AG04450 (cell line): ENCODE measurements at regions of chr12 and their contacts with region 1.

Region 1: GRCh38 chr12:107884769-107885694 is 110.5 kb downstream of the ASCL4 start:
- DNase-seq: peak; percentile 10
- H3K4me3 ChIP-seq: no peak overlapping the region
- H3K27ac ChIP-seq: no peak overlapping the region
- H3K27me3 ChIP-seq: no peaks in the 10 kb centered on the region
- CTCF ChIP-seq: peak; percentile 81

Region 2: DNA sequence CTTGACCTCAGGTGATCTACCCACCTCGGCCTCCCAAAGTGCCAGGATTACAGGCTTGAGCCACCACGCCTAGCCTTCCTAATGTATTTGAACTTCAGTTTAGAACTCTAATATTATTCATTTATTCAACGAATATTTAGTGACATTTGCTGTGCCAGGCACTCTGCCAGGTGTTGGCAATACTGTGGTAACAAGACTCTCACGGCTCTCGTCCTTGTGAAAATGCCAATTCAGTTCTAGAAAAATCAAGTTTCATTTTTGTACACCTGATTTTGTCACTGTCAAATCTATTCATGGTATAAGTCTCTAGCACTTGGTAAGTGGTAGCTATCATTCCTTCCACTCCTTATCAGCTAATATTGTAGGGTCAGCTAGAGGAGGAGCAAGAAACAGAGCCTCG is 205.7 kb before region 1 on chr12:
- CTCF ChIA-PET with region 1: interaction called, 162 read pairs
- POLR2A ChIA-PET with region 1: no interaction called
- DNase-seq: no peak
- H3K4me3 ChIP-seq: no peak overlapping the region
- H3K27ac ChIP-seq: no peak overlapping the region
- H3K27me3 ChIP-seq: peaks cover 17% of the 10 kb centered on the region
- CTCF ChIP-seq: no peak

Region 3: GRCh38 chr12:107702106-107702505 is 182.9 kb before region 1 on chr12:
- CTCF ChIA-PET with region 1: interaction called, 30 read pairs
- POLR2A ChIA-PET with region 1: no interaction called
- DNase-seq: no peak
- H3K4me3 ChIP-seq: no peak overlapping the region
- H3K27ac ChIP-seq: no peak overlapping the region
- H3K27me3 ChIP-seq: no peaks in the 10 kb centered on the region
- CTCF ChIP-seq: no peak

Region 4: DNA sequence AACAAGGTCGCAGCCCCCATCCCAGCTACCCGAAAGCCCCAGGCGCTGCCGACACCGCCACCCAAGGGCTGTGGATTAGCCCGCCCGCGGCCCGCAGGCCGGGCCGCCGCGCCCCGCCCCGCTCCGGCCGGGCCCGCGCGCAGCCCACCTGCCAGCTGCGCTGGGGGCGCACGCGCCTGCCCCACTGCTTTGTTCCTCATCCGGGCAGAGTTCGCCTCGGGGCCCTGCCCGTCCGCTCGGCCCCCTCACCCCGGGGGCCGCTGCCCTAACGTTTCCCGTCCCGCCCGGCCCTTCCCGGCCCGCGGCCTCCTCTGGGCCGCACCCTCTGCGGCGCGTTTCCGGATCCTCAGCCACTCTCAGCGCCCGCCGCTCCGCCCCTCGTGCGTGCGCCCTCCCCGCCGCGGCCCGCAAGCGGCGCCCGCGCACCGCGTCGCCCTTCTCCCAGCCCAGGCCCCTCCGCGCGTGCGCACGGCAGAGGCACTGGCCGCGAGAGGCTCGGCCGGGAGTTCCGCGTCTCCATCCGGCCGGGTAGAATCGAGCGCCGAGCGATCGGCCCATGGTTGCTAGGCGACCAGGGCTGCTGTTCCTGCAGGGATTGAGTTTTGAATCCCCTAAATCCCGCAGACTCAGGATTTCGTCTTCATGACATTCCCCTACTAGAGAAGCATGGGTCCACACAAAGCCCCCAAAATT is 124.1 kb before region 1 on chr12 and contains the start of gene PRDM4:
- CTCF ChIA-PET with region 1: interaction called, 12 read pairs
- POLR2A ChIA-PET with region 1: no interaction called
- DNase-seq: peak; percentile 82
- H3K4me3 ChIP-seq: peak within 1 kb of the TSS; percentile 89
- H3K27ac ChIP-seq: peak within 1 kb of the TSS; percentile 40
- H3K27me3 ChIP-seq: no peaks in the 10 kb centered on the region
- CTCF ChIP-seq: no peak
- polyA plus RNA-seq, gene PRDM4: 27.9 and 30.5 TPM in 2 replicates